ENCODE measurements at regions of chr1 and their contacts with region 1.

Region 1: DNA sequence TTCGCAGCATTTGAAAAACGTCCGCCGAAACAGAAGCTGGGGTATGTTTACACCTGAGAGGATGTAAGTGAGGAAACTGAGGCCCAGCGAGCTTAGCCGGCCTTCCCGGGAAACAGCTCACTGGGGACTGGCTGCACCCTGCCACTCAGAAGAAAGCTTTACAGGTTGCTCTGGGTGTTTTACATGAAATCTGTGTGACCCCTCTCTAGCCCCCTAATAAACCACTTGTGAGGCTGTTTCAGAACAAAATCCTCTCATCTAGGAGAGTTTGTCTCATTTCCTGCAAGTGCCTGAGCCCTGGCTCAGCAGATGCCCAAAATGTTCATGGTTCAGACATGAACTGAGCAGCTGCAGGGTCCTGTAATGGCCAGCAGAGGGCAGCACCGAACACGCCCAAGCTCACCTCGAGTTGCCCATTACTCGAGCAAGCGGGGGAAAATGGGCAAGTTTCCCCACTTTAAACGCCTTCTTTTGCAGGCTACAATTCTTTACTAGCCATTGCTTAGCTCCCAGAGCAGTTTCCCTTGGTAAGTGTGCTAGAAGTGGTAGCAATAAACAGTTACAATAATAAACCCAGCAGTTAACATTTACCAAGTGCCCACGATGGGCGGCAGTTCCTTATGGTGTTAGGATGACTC is 76.4 kb downstream of the FHAD1 start:
- DNase-seq: peak; percentile 46 to 83
- ATAC-seq: peak; percentile 94 to 95
- H3K4me3 ChIP-seq: no peak overlapping the region
- H3K27ac ChIP-seq: peak overlapping the region; percentile 78 to 87
- H3K4me1 ChIP-seq: peaks cover 18% of the 10 kb centered on the region
- CTCF ChIP-seq: peak; percentile 85
- EP300 ChIP-seq: no peak
- POLR2A ChIP-seq: no peak
- RAD21 ChIP-seq: peak; percentile 82 to 84

Region 2: DNA sequence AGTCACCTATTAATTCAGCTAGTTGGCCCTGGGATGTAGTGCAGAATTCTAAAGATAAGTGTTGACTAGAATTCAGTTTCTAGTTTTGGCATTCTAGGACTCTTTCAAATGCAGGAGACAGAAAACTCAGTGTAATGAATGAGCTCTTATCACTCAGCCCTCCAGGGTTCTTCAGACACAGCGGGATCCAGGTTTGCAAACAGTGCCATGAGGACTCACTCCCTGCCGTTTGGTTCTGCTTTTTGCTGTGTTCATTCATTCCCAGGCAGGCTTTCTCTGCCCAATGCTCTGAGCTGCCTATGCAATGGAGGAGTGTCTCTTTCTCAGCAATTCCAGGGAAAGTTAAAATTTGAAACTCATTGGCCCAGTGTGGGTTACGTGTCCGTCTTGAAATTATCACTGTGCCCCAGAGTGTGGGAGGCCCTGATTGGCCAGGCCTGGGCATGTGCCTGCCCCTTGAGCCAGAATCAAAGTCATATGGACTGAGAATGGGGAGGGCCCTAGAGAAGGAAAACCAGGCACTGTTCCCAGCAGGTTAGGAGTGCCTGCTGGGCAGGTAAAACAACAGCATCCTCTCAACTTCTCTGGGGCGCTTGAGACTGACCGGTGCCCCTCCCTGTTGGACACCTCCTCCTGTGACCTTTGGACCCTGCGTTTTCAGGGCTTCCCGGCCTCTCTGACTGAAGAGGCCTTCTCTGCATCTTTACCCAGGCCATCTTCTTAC is 126.5 kb before region 1 on chr1:
- CTCF ChIA-PET with region 1: no interaction called
- POLR2A ChIA-PET with region 1: no interaction called
- DNase-seq: peak in 1 of 2 experiments; percentile 39
- ATAC-seq: peak in 1 of 2 experiments; percentile 65; a peak in 3 of 6 replicates
- H3K4me3 ChIP-seq: no peak overlapping the region
- H3K27ac ChIP-seq: peak overlapping the region; percentile 71 to 93
- H3K4me1 ChIP-seq: peaks cover 80% of the 10 kb centered on the region
- CTCF ChIP-seq: no peak
- EP300 ChIP-seq: no peak
- POLR2A ChIP-seq: no peak
- RAD21 ChIP-seq: no peak

Region 3: GRCh38 chr1:15287035-15287979 is 36.2 kb before region 1 on chr1:
- CTCF ChIA-PET with region 1: no interaction called
- POLR2A ChIA-PET with region 1: no interaction called
- DNase-seq: no peak
- ATAC-seq: no peak
- H3K4me3 ChIP-seq: no peak overlapping the region
- H3K27ac ChIP-seq: peak overlapping the region; percentile 68 to 83; a peak in 5 of 6 replicates
- H3K4me1 ChIP-seq: peaks cover 35% of the 10 kb centered on the region
- CTCF ChIP-seq: no peak
- EP300 ChIP-seq: no peak
- POLR2A ChIP-seq: no peak
- RAD21 ChIP-seq: no peak

Region 4: DNA sequence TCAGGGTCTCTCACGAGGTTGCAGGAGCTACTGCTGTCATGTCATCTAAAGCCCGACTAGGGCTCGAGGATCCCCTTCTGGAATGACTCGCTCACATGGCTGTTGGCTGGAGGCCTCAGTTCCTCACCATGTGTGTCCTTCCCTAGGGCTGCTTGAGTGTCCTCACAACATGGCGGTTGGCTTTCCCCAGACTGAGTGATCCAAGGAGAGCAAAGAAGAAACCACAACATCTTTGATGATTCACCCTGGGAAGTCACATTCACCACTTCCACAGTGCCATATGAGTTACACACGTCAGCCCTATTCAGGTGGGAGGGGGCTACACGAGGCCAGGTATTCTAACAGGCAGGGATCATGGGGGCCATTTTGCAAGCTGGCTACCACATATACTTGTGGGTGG is 11.6 kb before region 1 on chr1:
- CTCF ChIA-PET with region 1: interaction called, 13 read pairs
- POLR2A ChIA-PET with region 1: no interaction called
- DNase-seq: no peak
- ATAC-seq: no peak
- H3K4me3 ChIP-seq: no peak overlapping the region
- H3K27ac ChIP-seq: no peak overlapping the region
- H3K4me1 ChIP-seq: no peaks in the 10 kb centered on the region
- CTCF ChIP-seq: no peak
- EP300 ChIP-seq: no peak
- POLR2A ChIP-seq: no peak
- RAD21 ChIP-seq: no peak

Region 5: GRCh38 chr1:15350551-15351200 is 27.2 kb after region 1 on chr1:
- CTCF ChIA-PET with region 1: interaction called, 12 read pairs
- POLR2A ChIA-PET with region 1: no interaction called
- DNase-seq: no peak
- ATAC-seq: no peak
- H3K4me3 ChIP-seq: no peak overlapping the region
- H3K27ac ChIP-seq: peak overlapping the region; percentile 93 to 96
- H3K4me1 ChIP-seq: peaks cover 57% of the 10 kb centered on the region
- CTCF ChIP-seq: no peak
- EP300 ChIP-seq: no peak
- POLR2A ChIP-seq: no peak
- RAD21 ChIP-seq: no peak

Region 6: DNA sequence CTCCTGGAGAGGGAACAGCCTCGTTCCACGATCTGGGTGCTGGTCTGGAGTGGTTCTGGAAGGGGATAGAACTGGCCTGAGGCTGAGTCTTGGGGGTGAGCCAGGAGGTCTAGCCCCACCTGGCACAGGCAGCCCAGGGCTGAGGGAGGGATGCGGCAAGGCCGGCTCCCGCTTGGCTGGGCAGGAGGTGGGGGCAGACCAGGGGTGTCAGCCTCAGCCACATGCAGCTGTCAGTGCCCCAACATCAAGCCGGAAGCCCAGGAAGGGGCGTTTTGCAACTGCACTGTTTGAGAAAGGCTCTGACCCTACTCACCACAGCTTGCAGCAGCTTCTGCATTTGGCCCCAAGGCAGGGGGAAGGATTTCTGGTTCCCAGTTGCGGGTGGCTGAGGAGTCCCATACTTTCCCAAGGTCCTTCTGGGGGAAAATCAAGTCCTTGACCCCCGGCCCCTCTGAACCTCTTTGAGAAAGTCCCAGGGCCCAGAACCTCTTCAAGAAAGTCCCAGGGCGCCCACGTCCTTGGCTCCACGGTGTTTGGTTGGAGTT is 88.2 kb after region 1 on chr1:
- CTCF ChIA-PET with region 1: interaction called, 22 read pairs
- POLR2A ChIA-PET with region 1: interaction called, 3 read pairs
- DNase-seq: no peak
- ATAC-seq: peak in 1 of 2 experiments; percentile 7; a peak in 3 of 6 replicates
- H3K4me3 ChIP-seq: peak overlapping the region; percentile 97
- H3K27ac ChIP-seq: peak overlapping the region; percentile 95 to 97
- H3K4me1 ChIP-seq: peaks cover 75% of the 10 kb centered on the region
- CTCF ChIP-seq: no peak
- EP300 ChIP-seq: no peak
- POLR2A ChIP-seq: no peak
- RAD21 ChIP-seq: no peak

Region 7: DNA sequence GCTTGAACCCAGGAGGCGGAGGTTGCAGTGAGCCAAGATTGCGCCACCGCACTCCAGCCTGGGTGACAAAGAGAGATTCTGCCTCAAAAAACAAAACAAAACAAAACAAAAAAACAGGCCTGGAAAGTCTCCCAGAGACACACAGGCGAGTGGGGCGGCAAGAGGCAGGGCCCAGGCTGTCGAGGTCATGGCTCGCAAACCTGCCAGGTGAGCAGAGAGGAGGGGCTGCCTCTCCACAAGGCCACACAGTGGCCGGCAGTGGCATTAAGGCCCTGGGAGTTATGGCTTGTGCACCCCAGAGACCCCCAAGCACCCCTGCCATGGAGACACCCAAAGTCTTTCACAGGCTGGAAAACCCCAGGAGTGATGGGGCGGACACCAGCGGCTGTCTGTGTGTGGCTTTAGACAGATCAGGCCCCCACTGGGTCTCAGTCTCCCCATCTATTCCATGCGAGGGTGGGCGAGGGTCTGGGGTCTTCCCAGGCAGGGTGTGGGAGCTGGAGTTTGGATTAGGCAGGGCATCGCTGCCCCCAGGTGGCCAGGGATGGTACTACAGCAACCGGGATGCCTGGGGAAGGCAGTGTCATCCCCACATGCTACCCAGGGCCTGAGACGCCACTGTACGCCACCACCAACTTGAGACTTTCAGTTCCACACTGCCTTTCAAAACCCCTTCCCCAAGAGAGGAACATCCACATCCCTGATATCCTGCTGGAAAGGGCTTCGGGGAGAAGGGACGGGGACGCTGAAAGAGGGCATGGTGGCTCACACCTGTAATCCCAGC is 107.5 kb after region 1 on chr1:
- CTCF ChIA-PET with region 1: interaction called, 150 read pairs
- POLR2A ChIA-PET with region 1: interaction called, 11 read pairs
- DNase-seq: peak in 1 of 2 experiments; percentile 60
- ATAC-seq: peak in 1 of 2 experiments; percentile 16; a peak in 3 of 6 replicates
- H3K4me3 ChIP-seq: no peak overlapping the region
- H3K27ac ChIP-seq: peak overlapping the region; percentile 97 to 98
- H3K4me1 ChIP-seq: peaks cover 69% of the 10 kb centered on the region
- CTCF ChIP-seq: peak; percentile 72
- EP300 ChIP-seq: no peak
- POLR2A ChIP-seq: no peak
- RAD21 ChIP-seq: peak; percentile 78 to 89

Measured in A549 (cell line).